CD8-positive, alpha-beta T cell (primary cell): ENCODE measurements at regions of chr10 and their contacts with region 1.

Region 1: DNA sequence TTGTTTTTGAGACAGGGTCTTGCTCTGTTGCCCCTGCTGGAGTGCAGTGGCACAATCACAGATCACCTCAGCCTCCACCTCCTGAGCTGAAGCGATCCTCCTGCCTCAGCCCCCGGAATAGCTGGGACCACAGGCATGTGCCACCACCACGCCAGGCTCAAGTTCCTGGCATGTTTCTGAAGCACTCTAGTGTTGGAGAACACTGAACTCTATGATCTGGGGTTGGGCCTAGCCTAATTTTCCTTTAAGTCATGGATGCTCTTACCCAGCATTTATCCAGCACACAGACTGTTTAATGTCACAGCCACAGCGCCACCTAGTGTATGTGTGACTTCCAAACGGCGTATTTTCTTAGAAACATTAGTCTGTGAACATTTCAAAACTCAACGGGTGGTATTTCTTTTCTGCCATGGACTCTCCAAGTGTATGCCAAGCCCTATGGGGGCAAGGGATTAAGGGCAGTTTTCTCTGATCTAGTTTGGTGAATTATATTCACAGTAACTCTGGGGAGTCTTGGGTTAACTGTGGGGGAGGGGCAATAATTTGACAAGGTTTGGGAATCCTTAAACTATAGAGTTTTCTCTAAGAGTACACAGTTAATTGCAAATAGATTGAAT is 91.8 kb downstream of the CREM start:
- DNase-seq: peak; percentile 62 to 90 (median 82)
- ATAC-seq: peak; percentile 84
- H3K4me3 ChIP-seq: no peak overlapping the region
- H3K4me3 Mint-ChIP-seq: no peak overlapping the region
- H3K27ac ChIP-seq: no peak overlapping the region
- H3K27ac Mint-ChIP-seq: no peak overlapping the region
- H3K4me1 ChIP-seq: peaks cover 6% of the 10 kb centered on the region
- H3K4me1 Mint-ChIP-seq: peaks cover 6% of the 10 kb centered on the region
- H3K27me3 ChIP-seq: no peaks in the 10 kb centered on the region
- H3K27me3 Mint-ChIP-seq: peaks cover 3% of the 10 kb centered on the region
- CTCF ChIP-seq: peak; percentile 73

Region 2: GRCh38 chr10:34655286-34656170 is 562.9 kb before region 1 on chr10:
- CTCF ChIA-PET with region 1: no interaction called
- POLR2A ChIA-PET with region 1: no interaction called
- intact Hi-C with region 1: loop called (anchors 5 to 10 kb)
- DNase-seq: peak in 2 of 9 experiments; percentile 26 to 40
- ATAC-seq: no peak
- H3K4me3 ChIP-seq: no peak overlapping the region
- H3K4me3 Mint-ChIP-seq: no peak overlapping the region
- H3K27ac ChIP-seq: no peak overlapping the region
- H3K27ac Mint-ChIP-seq: no peak overlapping the region
- H3K4me1 ChIP-seq: no peaks in the 10 kb centered on the region
- H3K4me1 Mint-ChIP-seq: no peaks in the 10 kb centered on the region
- H3K27me3 ChIP-seq: no peaks in the 10 kb centered on the region
- H3K27me3 Mint-ChIP-seq: peaks cover 4% of the 10 kb centered on the region
- CTCF ChIP-seq: peak; percentile 42

Region 3: GRCh38 chr10:34994565-34995142 is 223.8 kb before region 1 on chr10:
- CTCF ChIA-PET with region 1: interaction called, 6 read pairs
- POLR2A ChIA-PET with region 1: no interaction called
- intact Hi-C with region 1: loop called (anchors 2 kb)
- DNase-seq: peak in 6 of 9 experiments; percentile 11 to 57 (median 32)
- ATAC-seq: peak; percentile 62
- H3K4me3 ChIP-seq: no peak overlapping the region
- H3K4me3 Mint-ChIP-seq: no peak overlapping the region
- H3K27ac ChIP-seq: no peak overlapping the region
- H3K27ac Mint-ChIP-seq: no peak overlapping the region
- H3K4me1 ChIP-seq: peaks cover 6% of the 10 kb centered on the region
- H3K4me1 Mint-ChIP-seq: peaks cover 7% of the 10 kb centered on the region
- H3K27me3 ChIP-seq: no peaks in the 10 kb centered on the region
- H3K27me3 Mint-ChIP-seq: no peaks in the 10 kb centered on the region
- CTCF ChIP-seq: peak; percentile 36

Region 4: GRCh38 chr10:35119378-35119777 is 99.1 kb before region 1 on chr10:
- CTCF ChIA-PET with region 1: interaction called, 239 read pairs
- POLR2A ChIA-PET with region 1: interaction called, 4 read pairs
- intact Hi-C with region 1: loop called (anchors 1 kb)
- DNase-seq: no peak
- ATAC-seq: no peak
- H3K4me3 ChIP-seq: no peak overlapping the region
- H3K4me3 Mint-ChIP-seq: no peak overlapping the region
- H3K27ac ChIP-seq: no peak overlapping the region
- H3K27ac Mint-ChIP-seq: no peak overlapping the region
- H3K4me1 ChIP-seq: no peaks in the 10 kb centered on the region
- H3K4me1 Mint-ChIP-seq: no peaks in the 10 kb centered on the region
- H3K27me3 ChIP-seq: peaks cover 0 to 4% of the 10 kb centered on the region in 2 experiments
- H3K27me3 Mint-ChIP-seq: no peaks in the 10 kb centered on the region
- CTCF ChIP-seq: no peak

Region 5: GRCh38 chr10:35336084-35336831 is 117.8 kb after region 1 on chr10 and contains the start of gene CCNY:
- CTCF ChIA-PET with region 1: no interaction called
- POLR2A ChIA-PET with region 1: no interaction called
- intact Hi-C with region 1: loop called in 1 of 2 experiments (anchors 5 kb)
- DNase-seq: peak; percentile 56 to 83 (median 78)
- ATAC-seq: peak; percentile 86
- H3K4me3 ChIP-seq: peak within 1 kb of the TSS; percentile 77 to 78
- H3K4me3 Mint-ChIP-seq: peak within 1 kb of the TSS; percentile 88
- H3K27ac ChIP-seq: peak within 1 kb of the TSS; percentile 60 to 61
- H3K27ac Mint-ChIP-seq: peak within 1 kb of the TSS; percentile 86
- H3K4me1 ChIP-seq: peaks cover 52% of the 10 kb centered on the region
- H3K4me1 Mint-ChIP-seq: peaks cover 71% of the 10 kb centered on the region
- H3K27me3 ChIP-seq: no peaks in the 10 kb centered on the region
- H3K27me3 Mint-ChIP-seq: no peaks in the 10 kb centered on the region
- CTCF ChIP-seq: no peak
- total RNA-seq, gene CCNY: 75.3 to 77.3 TPM